ENCODE measurements at regions of chr6 and their contacts with region 1.

Region 1: DNA sequence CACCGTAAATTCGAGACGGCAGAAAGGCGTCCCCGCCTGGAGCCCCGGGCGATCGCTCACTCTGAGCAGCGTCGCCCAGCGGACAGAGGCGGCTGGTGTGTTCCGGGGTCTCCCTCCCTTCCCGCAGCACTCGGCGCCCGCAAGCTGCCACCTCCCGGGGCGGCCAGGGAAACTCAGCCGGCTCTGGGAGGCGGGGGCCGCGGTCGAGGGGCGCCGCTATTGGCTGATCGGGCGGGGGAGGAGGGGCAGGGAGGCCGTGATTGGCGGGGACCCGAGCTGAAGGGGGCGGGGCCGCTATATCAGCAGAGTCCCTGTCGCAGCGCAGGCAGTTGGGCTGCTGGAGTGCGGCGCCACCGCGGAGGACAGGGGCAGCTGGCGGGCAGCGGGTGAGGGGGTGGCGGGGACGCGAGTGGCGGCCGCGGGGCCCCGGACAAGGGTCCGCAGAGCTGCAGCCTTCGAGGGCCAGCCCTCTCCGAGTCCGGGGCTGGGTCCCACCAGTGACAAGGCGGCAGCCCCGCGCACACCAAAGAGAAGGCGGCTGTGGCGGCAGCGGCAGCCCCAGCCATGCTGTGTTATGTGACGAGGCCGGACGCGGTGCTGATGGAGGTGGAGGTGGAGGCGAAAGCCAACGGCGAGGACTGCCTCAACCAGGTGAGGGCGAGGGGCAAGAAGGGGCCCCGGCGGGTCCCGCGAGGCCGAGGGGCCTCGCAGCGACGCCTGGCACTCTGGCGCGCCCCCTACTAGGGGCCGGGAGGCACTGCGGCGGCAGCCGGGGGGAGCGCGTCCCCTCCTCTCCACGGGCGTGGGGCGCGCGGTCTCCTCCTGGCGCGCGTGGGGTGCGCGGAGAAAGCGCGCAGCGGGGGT is at the start of gene MYLIP:
- DNase-seq: peak in 1 of 2 donors; percentile 97
- H3K4me3 ChIP-seq: peak within 1 kb of the TSS; percentile 98 to 99
- H3K27ac ChIP-seq: peak within 1 kb of the TSS; percentile 99
- H3K4me1 ChIP-seq: peaks cover 29% of the 10 kb centered on the region
- H3K27me3 ChIP-seq: no peaks in the 10 kb centered on the region
- CTCF ChIP-seq: peak; percentile 20 to 74 (median 58)
- POLR2A ChIP-seq: peak; percentile 86 to 100
- total RNA-seq, gene MYLIP: 30.7 TPM

Region 2: DNA sequence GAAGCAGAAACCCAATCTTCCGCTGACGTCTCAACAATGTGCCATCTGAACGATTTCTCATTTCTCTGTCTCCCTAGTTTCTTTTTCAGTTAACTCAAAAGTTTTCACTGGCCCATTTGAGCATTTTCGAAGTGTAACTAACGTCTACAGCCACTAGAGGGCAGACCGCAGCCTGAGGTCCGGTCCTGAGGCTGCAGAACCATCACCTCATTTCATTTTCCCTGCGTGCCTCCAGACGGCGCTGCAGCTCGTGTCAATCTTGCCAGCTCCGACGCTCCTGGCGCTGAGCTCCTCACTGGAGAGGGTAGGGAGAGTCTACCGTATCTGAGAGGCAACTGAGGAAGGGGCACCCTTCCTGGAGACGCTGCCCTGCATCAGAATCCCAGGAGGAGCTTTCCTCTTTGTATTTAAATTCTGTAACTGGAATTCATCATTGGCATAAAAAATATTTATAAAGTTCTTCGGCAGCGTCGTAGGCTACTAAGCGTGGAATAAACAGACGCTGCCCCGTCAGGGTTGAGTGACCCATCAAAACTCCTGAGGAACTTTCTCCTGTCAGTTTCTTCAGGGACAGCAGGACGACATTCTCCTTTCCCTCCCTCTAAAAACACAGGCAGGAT is 437.6 kb before region 1 on chr6:
- intact Hi-C with region 1: loop called (anchors 10 kb)
- DNase-seq: peak in 1 of 2 donors; percentile 90
- H3K4me3 ChIP-seq: peak overlapping the region; percentile 34 to 37
- H3K27ac ChIP-seq: peak overlapping the region; percentile 35
- H3K4me1 ChIP-seq: peaks cover 11% of the 10 kb centered on the region
- H3K27me3 ChIP-seq: no peaks in the 10 kb centered on the region
- CTCF ChIP-seq: peak; percentile 99 to 100 (median 99)
- POLR2A ChIP-seq: no peak

Region 3: GRCh38 chr6:16183187-16183664 is 54.2 kb after region 1 on chr6:
- intact Hi-C with region 1: loop called (anchors 10 kb)
- DNase-seq: no peak
- H3K4me3 ChIP-seq: no peak overlapping the region
- H3K27ac ChIP-seq: peak overlapping the region; percentile 65
- H3K4me1 ChIP-seq: peaks cover 13% of the 10 kb centered on the region
- H3K27me3 ChIP-seq: no peaks in the 10 kb centered on the region
- CTCF ChIP-seq: peak; percentile 43 to 66 (median 44)
- POLR2A ChIP-seq: no peak

Measured in vagina (tissue), 2 donors.